CD4-positive, alpha-beta memory T cell (primary cell): ENCODE measurements at regions of chr2 and their contacts with region 1.

Region 1: DNA sequence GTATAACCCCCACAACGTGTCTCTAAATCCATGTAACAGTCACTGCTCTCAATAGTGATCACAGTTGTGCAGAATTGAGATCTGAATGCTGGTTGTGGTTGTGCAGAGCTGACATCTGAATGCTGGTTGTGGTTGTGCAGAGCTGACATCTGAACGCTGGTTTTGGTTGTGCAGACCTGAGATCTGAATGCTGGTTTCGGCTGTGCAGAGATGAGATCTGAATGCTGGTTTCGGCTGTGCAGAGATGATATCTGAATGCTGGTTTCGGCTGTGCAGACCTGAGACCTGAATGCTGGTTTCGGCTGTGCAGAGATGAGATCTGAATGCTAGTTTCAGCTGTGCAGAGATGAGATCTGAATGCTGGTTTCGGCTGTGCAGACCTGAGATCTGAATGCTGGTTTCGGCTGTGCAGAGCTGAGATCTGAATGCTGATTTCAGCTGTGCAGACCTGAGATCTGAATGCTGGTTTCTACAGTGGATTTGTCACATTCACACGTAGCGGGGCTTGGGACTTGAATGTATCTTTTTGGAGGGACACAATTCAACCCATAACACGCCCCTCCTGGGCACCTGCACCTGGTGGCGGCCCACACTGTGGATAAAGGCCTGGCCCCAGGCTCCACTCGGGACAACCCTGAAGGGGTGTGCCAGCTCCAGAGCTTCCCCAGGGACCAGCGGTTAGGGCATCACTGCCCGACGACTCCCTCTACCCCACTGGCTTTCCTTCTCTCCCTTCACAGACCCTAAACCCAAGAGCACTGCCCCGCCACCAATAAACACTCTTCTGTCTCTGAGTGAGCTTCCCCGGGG is 51.1 kb upstream of the SLC66A3 start:
- DNase-seq: peak; percentile 36 to 63 (median 47)
- H3K4me3 ChIP-seq: peak overlapping the region in 1 of 2 donors; percentile 44
- H3K4me3 Mint-ChIP-seq: peak overlapping the region; percentile 61 to 90 (median 76)
- H3K27ac ChIP-seq: no peak overlapping the region
- H3K27ac Mint-ChIP-seq: peak overlapping the region; percentile 33 to 85 (median 80)
- H3K4me1 ChIP-seq: peaks cover 52% of the 10 kb centered on the region
- H3K4me1 Mint-ChIP-seq: peaks cover 21 to 36% (median 33%) of the 10 kb centered on the region in 4 donors
- H3K27me3 ChIP-seq: no peaks in the 10 kb centered on the region
- H3K27me3 Mint-ChIP-seq: no peaks in the 10 kb centered on the region

Region 2: DNA sequence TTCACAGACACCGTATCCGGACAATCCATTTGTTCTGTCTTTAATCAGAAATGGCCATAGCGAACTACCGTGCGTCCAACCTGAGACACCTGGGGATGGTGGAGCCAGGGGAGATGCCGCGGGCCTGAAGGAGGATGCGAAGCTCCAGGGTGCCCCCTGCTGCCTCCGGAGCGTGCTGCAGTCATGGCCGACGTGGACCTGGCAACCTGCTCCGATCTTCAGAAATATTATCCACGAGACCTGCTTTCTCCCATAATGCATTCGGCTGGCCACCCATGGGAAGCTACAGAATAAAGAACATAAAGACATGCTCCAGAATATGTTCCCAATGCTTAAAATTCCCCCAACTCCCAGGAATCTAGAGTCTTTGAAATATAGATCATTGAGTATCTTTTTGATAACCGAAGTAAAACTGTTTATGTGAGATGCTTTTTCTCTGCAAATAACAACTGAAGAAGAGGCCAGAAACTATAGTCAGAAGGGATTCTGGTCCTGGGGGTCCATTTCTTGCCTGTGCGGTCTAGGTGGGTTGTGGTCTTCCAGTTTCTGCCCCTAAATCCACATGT is 20.4 kb after region 1 on chr2:
- CTCF ChIA-PET with region 1: interaction called, 47 read pairs
- POLR2A ChIA-PET with region 1: interaction called, 9 read pairs
- intact Hi-C with region 1: no loop called
- DNase-seq: peak; percentile 53 to 67 (median 58)
- H3K4me3 ChIP-seq: no peak overlapping the region
- H3K4me3 Mint-ChIP-seq: no peak overlapping the region
- H3K27ac ChIP-seq: no peak overlapping the region
- H3K27ac Mint-ChIP-seq: peak overlapping the region in 3 of 7 donors; percentile 27 to 68 (median 51)
- H3K4me1 ChIP-seq: peaks cover 21% of the 10 kb centered on the region
- H3K4me1 Mint-ChIP-seq: peaks cover 8 to 26% (median 22%) of the 10 kb centered on the region in 4 donors
- H3K27me3 ChIP-seq: no peaks in the 10 kb centered on the region
- H3K27me3 Mint-ChIP-seq: no peaks in the 10 kb centered on the region